ENCODE measurements at regions of chr2 and their contacts with region 1.

Region 1: GRCh38 chr2:70086838-70087701 is at the start of gene PCBP1:
- DNase-seq: peak; percentile 97
- ATAC-seq: peak; percentile 85
- H3K4me3 ChIP-seq: peak within 1 kb of the TSS; percentile 69
- H3K4me1 ChIP-seq: peaks cover 37% of the 10 kb centered on the region
- CTCF ChIP-seq: no peak
- total RNA-seq, gene PCBP1: 243 to 383 (median 266) TPM

Region 2: GRCh38 chr2:69902213-69902922 is 184.7 kb before region 1 on chr2:
- intact Hi-C with region 1: no loop called
- DNase-seq: peak in 1 of 3 donors; percentile 67
- ATAC-seq: peak; percentile 47
- H3K4me3 ChIP-seq: no peak overlapping the region
- H3K4me1 ChIP-seq: no peaks in the 10 kb centered on the region
- CTCF ChIP-seq: no peak

Region 3: DNA sequence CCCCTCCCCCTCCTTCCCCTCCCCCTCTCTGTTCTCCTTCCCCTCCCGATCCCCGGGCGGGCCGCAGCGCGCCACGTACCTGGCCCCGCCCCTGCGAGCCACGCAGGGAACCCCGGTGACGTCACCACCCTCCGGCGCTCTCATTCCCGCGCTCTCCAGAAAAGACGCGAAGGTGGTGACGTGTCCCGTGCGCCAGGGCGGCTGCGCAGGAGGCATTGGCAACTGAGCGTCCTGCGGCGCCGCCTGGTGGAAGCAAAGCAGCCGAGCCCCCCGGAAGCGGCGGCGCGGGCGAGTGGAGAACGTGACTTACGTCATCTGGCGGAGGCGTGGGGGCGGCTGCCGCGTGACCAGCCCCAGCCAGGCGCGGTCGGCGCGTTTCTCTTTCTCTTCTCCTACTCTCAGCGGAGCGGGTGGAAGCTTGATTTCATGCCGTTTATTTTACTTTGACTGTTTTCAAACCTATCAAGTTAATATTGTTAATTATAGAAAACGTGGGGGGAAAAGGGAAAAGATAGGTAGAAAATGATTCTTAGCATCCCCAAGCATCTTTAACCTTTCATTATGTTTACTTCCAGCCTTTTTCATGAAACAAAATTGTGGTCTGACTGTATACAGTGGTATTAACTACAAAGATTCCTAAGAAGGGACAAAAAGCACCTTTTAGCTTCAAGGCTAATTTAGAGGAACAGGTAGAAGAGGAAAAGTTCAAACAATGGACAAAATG is 55.7 kb after region 1 on chr2:
- intact Hi-C with region 1: loop called (anchors 5 kb)
- DNase-seq: peak; percentile 99 to 100 (median 100)
- ATAC-seq: peak; percentile 84
- H3K4me3 ChIP-seq: peak overlapping the region; percentile 23
- H3K4me1 ChIP-seq: peaks cover 9% of the 10 kb centered on the region
- CTCF ChIP-seq: peak; percentile 89

Measured in mucosa of descending colon (tissue), 3 donors.